ENCODE measurements at regions of chr2 and their contacts with region 1.

Region 1: GRCh38 chr2:227766373-227766883 is 20.7 kb downstream of the SCYGR8 start:
- DNase-seq: peak; percentile 32
- H3K4me3 Mint-ChIP-seq: no peak overlapping the region
- H3K27ac Mint-ChIP-seq: no peak overlapping the region
- H3K4me1 Mint-ChIP-seq: no peaks in the 10 kb centered on the region
- H3K27me3 Mint-ChIP-seq: no peaks in the 10 kb centered on the region

Region 2: DNA sequence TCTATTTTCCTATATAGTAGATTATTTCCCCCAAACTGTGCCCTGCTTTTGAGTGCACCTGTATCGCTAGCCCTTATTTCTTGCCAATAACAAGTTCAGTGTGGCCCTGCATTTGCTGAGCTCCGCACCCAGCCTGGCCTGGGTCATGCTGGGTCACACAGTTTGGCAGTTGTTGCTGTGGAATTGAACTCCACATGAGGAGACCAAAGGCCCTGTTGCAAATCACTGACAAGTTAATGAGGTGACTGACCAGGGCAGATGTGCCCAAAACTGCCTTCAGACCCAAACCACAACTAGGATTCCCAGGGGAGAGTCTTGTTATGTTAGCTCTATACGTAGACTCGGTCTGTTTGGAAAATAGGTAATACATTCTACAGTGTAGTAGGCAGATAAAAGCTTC is 633.4 kb before region 1 on chr2:
- intact Hi-C with region 1: loop called (anchors 5 kb)
- DNase-seq: no peak
- H3K4me3 Mint-ChIP-seq: no peak overlapping the region
- H3K27ac Mint-ChIP-seq: no peak overlapping the region
- H3K4me1 Mint-ChIP-seq: no peaks in the 10 kb centered on the region
- H3K27me3 Mint-ChIP-seq: peaks cover 7% of the 10 kb centered on the region

Region 3: DNA sequence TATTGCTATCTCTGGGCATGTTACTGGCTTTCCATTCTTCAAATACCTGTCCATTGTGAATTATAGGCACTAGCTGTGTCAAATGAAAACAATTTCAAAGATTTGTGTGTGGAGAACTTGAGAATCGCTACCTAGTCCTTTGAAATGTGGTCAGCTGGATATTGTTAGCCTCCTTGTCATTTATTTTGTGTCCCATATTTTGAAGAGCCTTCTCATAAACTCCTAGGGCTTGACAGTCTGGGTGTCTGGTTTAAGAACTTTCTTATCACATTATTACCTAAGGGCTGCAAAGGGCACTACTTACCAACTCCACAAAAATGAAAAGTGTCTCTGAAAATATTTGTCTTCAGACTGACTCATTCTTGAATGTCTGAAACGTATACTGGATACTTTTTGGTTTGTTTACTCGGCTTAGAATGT is 551.8 kb before region 1 on chr2:
- intact Hi-C with region 1: no loop called
- DNase-seq: no peak
- H3K4me3 Mint-ChIP-seq: no peak overlapping the region
- H3K27ac Mint-ChIP-seq: no peak overlapping the region
- H3K4me1 Mint-ChIP-seq: no peaks in the 10 kb centered on the region
- H3K27me3 Mint-ChIP-seq: no peaks in the 10 kb centered on the region

Region 4: GRCh38 chr2:227406177-227407031 is 360.0 kb before region 1 on chr2:
- intact Hi-C with region 1: loop called (anchors 5 kb)
- DNase-seq: no peak
- H3K4me3 Mint-ChIP-seq: no peak overlapping the region
- H3K27ac Mint-ChIP-seq: no peak overlapping the region
- H3K4me1 Mint-ChIP-seq: peaks cover 34% of the 10 kb centered on the region
- H3K27me3 Mint-ChIP-seq: no peaks in the 10 kb centered on the region

Region 5: GRCh38 chr2:227471924-227472264 is 294.5 kb before region 1 on chr2 and contains the start of gene AGFG1:
- intact Hi-C with region 1: loop called (anchors 10 kb)
- DNase-seq: peak; percentile 81
- H3K4me3 Mint-ChIP-seq: peak within 1 kb of the TSS; percentile 88
- H3K27ac Mint-ChIP-seq: peak within 1 kb of the TSS; percentile 78
- H3K4me1 Mint-ChIP-seq: peaks cover 31% of the 10 kb centered on the region
- H3K27me3 Mint-ChIP-seq: no peaks in the 10 kb centered on the region
- total RNA-seq, gene AGFG1: 137 and 139 TPM in 2 replicates

Region 6: DNA sequence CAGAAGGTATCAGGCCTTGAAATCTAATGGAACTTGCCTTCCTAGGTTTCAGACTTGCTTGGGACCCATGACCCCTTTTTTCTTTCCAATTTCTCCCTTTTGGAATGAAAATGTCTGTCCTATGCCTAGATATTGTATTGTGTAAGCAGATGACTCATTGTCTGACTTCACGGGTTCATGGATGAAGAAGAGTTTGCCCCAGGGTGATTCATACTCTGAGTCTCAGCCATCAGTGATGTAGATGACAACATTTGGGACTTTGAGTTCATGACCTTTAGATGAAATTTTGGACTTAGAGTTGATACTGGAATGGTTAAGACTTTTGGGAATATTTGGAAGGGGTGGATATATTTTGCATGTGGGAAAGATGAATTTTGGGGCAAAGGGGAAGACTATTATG is 111.0 kb before region 1 on chr2:
- intact Hi-C with region 1: loop called (anchors 1 kb)
- DNase-seq: no peak
- H3K4me3 Mint-ChIP-seq: no peak overlapping the region
- H3K27ac Mint-ChIP-seq: no peak overlapping the region
- H3K4me1 Mint-ChIP-seq: peaks cover 2% of the 10 kb centered on the region
- H3K27me3 Mint-ChIP-seq: peaks cover 3% of the 10 kb centered on the region

Region 7: DNA sequence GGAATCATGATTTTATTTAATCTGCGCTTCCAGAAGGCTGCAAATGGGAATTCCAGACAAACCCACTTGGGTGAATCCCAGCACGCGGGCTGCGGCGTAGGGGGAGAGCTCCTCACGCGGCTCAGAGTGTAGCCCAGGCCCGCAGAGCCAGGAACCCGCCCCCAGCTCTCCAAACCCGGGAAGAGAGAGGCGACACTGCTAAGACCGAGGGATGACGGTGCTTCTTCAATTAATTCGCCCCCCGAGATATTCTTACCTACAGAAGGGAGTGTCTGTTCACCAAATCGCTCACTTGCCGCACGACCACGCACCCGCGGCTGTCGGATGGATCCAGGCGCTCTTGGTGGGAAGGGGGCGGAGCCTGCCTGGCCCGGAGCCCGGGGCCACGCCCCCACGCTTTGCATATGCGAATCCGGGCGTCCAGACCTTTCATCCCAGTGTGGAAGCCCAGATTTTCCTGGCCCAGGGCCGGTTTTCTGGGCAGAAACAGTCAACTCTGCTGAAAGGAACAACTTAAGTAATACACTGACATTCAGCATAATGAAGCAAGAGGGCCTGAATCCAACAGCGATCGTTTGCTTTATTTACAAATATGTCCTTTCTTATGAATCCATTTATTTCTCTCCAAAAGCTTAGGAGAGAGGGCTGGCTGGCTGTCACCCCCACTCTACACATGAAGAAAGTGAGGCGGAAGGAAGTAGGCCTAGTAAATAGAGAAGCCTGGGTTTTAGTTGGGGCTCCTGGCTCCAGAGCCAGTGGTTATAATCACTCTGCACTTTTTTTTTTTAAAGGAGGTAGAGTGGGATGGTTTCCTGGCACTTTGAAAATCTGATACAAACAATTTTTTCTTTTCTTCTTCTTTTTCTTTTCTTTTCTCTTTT is 48.5 kb before region 1 on chr2 and contains the start of gene SLC19A3:
- intact Hi-C with region 1: no loop called
- DNase-seq: no peak
- H3K4me3 Mint-ChIP-seq: no peak within 1 kb of the TSS
- H3K27ac Mint-ChIP-seq: no peak within 1 kb of the TSS
- H3K4me1 Mint-ChIP-seq: no peaks in the 10 kb centered on the region
- H3K27me3 Mint-ChIP-seq: peaks cover 6% of the 10 kb centered on the region
- total RNA-seq, gene SLC19A3: not detected in 2 replicates

Measured in activated T-helper 2 cell treated with anti-CD3 and anti-CD28 coated beads, Interferon-gamma antibody, Interleukin-2, Interleukin-4, amounts not matched to agents 10 μg/mL and 5 μg/mL and 100 μg/mL, durations not matched to agents 14 hours and 24 hours and 36 hours (primary cell).